Common myeloid progenitor, CD34-positive (primary cell): ENCODE measurements at regions of chr14 and their contacts with region 1.

Region 1: DNA sequence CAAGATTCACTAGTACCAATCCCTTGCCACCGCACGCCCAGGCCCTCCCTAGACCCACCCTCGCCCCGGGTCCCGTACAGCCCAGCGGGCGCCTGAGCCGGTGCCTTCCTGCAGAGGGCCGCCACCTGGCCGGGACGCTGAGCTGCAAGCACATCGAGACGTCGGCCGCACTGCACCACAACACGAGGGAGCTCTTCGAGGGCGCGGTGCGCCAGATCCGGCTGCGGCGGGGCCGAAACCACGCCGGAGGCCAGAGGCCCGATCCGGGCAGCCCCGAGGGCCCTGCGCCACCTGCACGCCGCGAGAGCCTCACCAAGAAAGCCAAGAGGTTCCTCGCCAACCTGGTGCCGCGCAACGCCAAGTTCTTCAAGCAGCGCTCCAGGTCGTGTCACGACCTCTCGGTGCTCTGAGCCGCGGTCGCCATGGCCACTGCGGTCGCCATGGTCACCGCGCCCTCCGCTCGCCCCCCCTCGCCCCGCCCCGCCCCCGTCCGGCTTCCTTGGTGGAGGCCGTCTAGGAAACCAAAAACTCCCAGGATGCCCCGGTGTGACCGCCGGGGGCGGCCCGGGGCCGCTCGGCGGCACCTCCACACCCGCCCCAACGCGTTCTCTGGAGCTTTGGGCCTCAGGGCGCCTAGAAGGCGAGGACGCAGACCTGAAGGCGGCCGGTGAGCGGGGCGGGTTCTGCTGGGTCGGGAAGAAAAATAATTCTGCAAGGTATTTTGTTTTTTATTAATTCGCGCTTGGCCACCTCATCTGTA is 3.7 kb downstream of the REM2 start:
- DNase-seq: peak; percentile 67 to 87 (median 79)
- H3K4me3 ChIP-seq: peak overlapping the region in 3 of 7 experiments; percentile 44 to 51 (median 46)
- H3K27ac ChIP-seq: peak overlapping the region in 1 of 2 experiments; percentile 55
- H3K4me1 ChIP-seq: peaks cover 0 to 24% (median 15%) of the 10 kb centered on the region in 4 experiments
- H3K27me3 ChIP-seq: peaks cover 0 to 59% (median 17%) of the 10 kb centered on the region in 5 experiments

Region 2: DNA sequence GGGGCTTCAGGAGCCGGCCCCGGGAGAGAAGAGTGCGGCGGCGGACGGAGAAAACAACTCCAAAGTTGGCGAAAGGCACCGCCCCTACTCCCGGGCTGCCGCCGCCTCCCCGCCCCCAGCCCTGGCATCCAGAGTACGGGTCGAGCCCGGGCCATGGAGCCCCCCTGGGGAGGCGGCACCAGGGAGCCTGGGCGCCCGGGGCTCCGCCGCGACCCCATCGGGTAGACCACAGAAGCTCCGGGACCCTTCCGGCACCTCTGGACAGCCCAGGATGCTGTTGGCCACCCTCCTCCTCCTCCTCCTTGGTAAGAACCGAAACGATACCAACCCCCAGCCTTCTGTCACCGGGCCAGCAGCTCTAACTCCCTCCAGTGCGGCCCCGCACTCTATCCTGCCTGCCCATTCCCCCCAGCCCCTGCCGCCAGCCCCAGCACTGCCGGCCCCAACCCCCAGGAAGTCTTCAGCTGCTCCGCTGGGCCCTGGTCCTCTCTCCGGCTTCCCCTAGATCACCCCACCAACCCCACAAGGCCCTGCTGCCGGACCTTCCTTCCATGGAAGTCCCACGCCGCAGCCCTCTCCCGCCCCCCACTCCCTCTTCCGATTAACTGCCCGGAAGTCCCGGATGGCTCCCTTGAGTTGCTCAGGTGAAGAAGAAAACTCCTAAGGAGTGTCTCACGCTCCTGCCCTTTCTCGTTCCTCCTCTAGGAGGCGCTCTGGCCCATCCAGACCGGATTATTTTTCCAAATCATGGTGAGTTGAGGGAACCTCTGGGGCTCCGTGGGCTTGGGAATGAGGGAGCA is 14.4 kb before region 1 on chr14:
- CTCF ChIA-PET with region 1: interaction called, 34 read pairs
- POLR2A ChIA-PET with region 1: no interaction called
- DNase-seq: peak; percentile 61 to 65 (median 62)
- H3K4me3 ChIP-seq: peak overlapping the region; percentile 59 to 91 (median 78)
- H3K27ac ChIP-seq: peak overlapping the region; percentile 29 to 82
- H3K4me1 ChIP-seq: peaks cover 8 to 24% (median 22%) of the 10 kb centered on the region in 4 experiments
- H3K27me3 ChIP-seq: peaks cover 0 to 2% (median 0%) of the 10 kb centered on the region in 5 experiments